ENCODE measurements at regions of chr2 and their contacts with region 1.

Region 1: DNA sequence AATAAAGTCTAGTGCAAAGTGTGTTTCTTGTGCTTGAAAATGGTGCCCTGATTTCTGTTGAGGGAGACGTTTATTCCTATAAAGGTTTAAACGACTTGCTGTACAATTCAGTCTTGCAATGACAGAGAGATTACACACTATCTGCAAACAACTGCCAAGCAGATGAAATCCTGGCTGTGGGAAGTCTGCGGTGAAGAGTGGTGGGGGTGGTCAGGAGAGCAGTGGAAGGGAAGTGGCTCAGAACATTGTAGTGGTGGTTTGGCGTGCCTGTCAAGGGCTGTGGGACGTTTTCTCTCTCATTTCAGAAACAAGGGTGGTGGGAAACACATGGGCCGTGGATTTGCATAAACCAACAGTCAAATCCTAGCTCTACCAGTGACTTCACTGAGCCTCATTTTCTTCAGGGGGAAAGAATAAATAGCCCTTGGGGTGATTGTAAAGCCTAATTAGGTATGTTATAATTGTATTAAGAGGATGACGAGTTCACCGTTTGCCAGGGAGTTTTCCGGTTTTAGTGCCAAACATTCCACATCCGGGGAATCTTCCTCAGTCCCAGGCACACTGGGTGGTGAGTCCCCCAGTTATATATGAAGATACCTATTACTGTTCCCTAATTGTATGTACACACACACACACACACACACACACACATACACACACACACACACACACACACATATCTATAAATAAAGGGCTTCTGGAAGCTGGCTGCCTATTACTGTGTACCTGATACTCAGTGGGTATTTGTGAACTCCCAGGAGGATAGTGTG is 115.0 kb downstream of the SPTBN1 start:
- DNase-seq: peak; percentile 90
- ATAC-seq: peak; percentile 50
- H3K4me3 Mint-ChIP-seq: peak overlapping the region; percentile 65
- H3K27ac Mint-ChIP-seq: peak overlapping the region; percentile 99
- H3K4me1 Mint-ChIP-seq: peaks cover 90% of the 10 kb centered on the region
- H3K27me3 Mint-ChIP-seq: no peaks in the 10 kb centered on the region

Region 2: DNA sequence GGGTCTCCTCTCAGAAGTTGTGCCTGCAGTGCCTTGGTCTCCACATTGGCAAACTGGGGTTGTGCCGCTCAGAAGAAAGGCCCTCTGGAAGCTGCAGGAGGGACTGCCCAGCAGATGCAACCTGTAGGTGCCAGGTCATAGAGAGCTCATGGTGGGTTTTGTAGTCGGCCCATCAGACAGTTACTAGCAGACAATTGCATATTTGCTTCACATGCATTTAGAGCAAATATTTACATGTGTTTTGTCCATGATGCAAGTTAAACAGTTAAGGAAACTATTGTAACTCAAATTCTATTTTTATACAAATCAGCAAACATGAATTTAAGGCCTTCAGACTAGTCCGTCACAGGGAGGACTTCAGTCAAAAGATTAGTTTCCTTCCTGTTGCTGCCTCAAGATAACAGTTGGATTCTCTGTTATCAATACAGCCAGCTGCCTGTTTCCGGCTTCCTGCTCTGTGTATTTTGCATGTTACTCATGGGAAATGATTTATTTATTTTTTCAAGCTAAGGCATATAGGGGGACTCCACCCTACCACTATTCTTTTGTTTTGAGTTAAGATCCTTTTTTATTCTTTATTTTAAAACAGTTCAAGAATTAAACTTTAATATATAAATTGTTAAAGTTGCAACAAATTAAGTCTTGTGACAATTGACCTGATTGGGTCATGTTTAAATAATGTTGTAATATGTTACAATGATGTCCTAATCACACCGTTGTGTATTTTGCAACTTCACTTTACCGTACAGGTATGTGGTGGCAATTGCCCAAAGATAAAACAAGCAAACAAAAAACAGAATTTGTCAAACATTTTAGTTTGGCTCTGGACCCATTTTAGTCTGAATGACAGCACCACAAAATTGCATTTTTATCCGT is 18.5 kb after region 1 on chr2:
- CTCF ChIA-PET with region 1: interaction called, 7 read pairs
- POLR2A ChIA-PET with region 1: interaction called, 3 read pairs
- intact Hi-C with region 1: loop called (anchors 1 kb)
- DNase-seq: peak; percentile 66
- ATAC-seq: peak; percentile 71
- H3K4me3 Mint-ChIP-seq: peak overlapping the region; percentile 53
- H3K27ac Mint-ChIP-seq: peak overlapping the region; percentile 93
- H3K4me1 Mint-ChIP-seq: peaks cover 84% of the 10 kb centered on the region
- H3K27me3 Mint-ChIP-seq: no peaks in the 10 kb centered on the region

Region 3: DNA sequence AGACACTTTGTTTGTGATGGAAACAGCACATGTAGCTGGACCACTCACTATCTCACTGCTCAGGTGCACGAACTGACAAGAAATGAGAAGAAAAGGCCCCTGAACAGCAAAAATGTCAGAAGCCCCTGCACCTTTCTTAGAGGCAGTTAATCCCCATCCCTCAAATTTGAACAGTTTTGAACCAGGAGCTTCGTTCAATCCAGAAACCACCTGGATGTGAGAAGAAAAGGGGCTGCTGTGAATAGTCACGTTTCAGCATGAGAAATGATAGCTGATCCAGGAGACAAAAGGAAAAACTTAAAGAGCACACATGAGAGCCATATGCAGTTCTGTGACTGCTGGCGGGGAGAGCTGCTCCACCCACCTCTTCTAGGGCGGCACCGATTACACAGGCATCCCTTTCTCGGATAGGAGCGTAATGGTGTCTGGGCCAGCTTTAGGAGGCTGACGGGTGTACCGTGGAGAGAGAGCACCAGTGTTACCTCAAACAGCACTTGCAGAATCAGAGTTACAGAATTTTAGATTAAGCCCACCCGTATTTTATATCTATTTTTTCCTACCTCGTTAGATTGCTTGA is 35.4 kb after region 1 on chr2:
- CTCF ChIA-PET with region 1: interaction called, 6 read pairs
- POLR2A ChIA-PET with region 1: no interaction called
- intact Hi-C with region 1: loop called in 1 of 2 experiments (anchors 2 kb)
- DNase-seq: peak; percentile 77
- ATAC-seq: peak; percentile 81
- H3K4me3 Mint-ChIP-seq: peak overlapping the region; percentile 50
- H3K27ac Mint-ChIP-seq: peak overlapping the region; percentile 85
- H3K4me1 Mint-ChIP-seq: peaks cover 80% of the 10 kb centered on the region
- H3K27me3 Mint-ChIP-seq: no peaks in the 10 kb centered on the region

Region 4: GRCh38 chr2:54680397-54681041 is 109.4 kb after region 1 on chr2:
- CTCF ChIA-PET with region 1: interaction called, 6 read pairs
- POLR2A ChIA-PET with region 1: no interaction called
- intact Hi-C with region 1: loop called (anchors 2 to 5 kb)
- DNase-seq: peak; percentile 69
- ATAC-seq: peak; percentile 95
- H3K4me3 Mint-ChIP-seq: no peak overlapping the region
- H3K27ac Mint-ChIP-seq: peak overlapping the region; percentile 72
- H3K4me1 Mint-ChIP-seq: peaks cover 22% of the 10 kb centered on the region
- H3K27me3 Mint-ChIP-seq: peaks cover 61% of the 10 kb centered on the region

Region 5: DNA sequence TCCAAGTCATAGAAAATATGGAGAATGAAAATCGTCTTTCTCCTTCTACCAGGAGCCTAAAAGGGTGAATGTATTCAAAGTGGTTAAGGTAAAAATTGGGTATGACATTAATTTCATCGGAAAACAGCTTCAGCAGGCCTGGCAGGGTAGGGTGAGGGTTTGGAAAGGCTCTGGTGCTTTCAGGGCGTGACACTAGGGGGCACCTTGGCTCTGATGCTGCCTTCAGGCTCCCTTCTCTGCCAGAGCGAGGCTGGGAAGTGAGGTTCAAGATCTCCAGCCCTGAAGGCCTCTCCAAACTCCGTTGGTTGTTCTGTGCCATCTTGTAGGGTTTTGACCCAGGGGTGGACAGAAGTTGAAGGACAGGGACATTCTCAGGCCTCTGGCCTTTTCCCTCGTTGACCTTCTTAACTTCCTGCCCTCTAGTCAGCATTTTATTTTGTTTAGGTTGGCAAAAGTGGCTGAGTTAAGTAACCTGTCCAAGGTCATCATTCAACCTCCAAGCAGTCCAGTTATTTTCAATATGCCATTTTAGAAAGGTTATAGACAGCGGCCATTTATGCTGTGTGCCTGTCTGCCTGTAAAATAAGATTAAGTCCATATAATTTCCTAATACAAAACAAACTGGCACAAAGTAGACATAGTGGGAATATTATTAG is 192.7 kb after region 1 on chr2:
- CTCF ChIA-PET with region 1: no interaction called
- POLR2A ChIA-PET with region 1: no interaction called
- intact Hi-C with region 1: loop called in 1 of 2 experiments (anchors 5 kb)
- DNase-seq: peak; percentile 64
- ATAC-seq: peak; percentile 34
- H3K4me3 Mint-ChIP-seq: no peak overlapping the region
- H3K27ac Mint-ChIP-seq: no peak overlapping the region
- H3K4me1 Mint-ChIP-seq: peaks cover 13% of the 10 kb centered on the region
- H3K27me3 Mint-ChIP-seq: peaks cover 2% of the 10 kb centered on the region

Measured in activated CD4-positive, alpha-beta T cell treated with anti-CD3 and anti-CD28 coated beads for 36 hours (primary cell).